ENCODE measurements at regions of chr7 and their contacts with region 1.

Region 1: GRCh38 chr7:143416565-143417149 is 8.0 kb upstream of the EPHA1 start:
- DNase-seq: peak in 4 of 14 experiments; percentile 20 to 75 (median 68)
- ATAC-seq: no peak
- H3K4me3 ChIP-seq: no peak overlapping the region
- H3K4me3 Mint-ChIP-seq: no peak overlapping the region
- H3K27ac ChIP-seq: no peak overlapping the region
- H3K27ac Mint-ChIP-seq: no peak overlapping the region
- H3K4me1 ChIP-seq: no peaks in the 10 kb centered on the region
- H3K4me1 Mint-ChIP-seq: peaks cover 46% of the 10 kb centered on the region
- H3K27me3 ChIP-seq: no peaks in the 10 kb centered on the region
- H3K27me3 Mint-ChIP-seq: no peaks in the 10 kb centered on the region
- CTCF ChIP-seq: peak; percentile 82

Region 2: GRCh38 chr7:143299840-143300239 is 116.8 kb before region 1 on chr7:
- CTCF ChIA-PET with region 1: no interaction called
- POLR2A ChIA-PET with region 1: no interaction called
- intact Hi-C with region 1: loop called (anchors 2 to 5 kb)
- DNase-seq: peak; percentile 52 to 83 (median 67)
- ATAC-seq: peak; percentile 100
- H3K4me3 ChIP-seq: no peak overlapping the region
- H3K4me3 Mint-ChIP-seq: no peak overlapping the region
- H3K27ac ChIP-seq: no peak overlapping the region
- H3K27ac Mint-ChIP-seq: no peak overlapping the region
- H3K4me1 ChIP-seq: peaks cover 11% of the 10 kb centered on the region
- H3K4me1 Mint-ChIP-seq: peaks cover 40% of the 10 kb centered on the region
- H3K27me3 ChIP-seq: no peaks in the 10 kb centered on the region
- H3K27me3 Mint-ChIP-seq: no peaks in the 10 kb centered on the region
- CTCF ChIP-seq: peak; percentile 70

Region 3: DNA sequence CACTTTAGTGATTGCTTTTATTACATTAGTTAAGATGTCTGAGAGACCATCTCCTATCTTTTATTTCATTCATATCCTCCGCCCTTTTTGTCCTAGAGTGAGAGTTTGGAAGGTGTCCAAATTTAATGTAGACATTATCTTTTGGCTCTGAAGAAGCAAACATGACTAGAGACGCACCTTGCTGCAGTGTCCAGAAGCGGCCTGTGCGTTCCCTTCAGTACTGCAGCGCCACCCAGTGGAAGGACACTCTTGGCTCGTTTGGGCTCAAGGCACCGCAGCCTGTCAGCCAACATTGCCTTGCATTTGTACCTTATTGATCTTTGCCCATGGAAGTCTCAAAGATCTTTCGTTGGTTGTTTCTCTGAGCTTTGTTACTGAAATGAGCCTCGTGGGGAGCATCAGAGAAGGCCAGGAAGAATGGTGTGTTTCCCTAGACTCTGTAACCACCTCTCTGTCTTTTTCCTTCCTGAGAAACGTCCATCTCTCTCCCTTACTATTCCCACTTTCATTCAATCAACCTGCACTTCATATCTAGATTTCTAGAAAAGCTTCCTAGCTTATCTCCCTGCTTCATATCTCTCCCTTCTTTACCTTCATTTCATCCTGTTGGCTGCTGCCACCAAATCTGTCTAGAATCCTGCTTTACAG is 111.1 kb before region 1 on chr7:
- CTCF ChIA-PET with region 1: no interaction called
- POLR2A ChIA-PET with region 1: no interaction called
- intact Hi-C with region 1: loop called (anchors 2 to 5 kb)
- DNase-seq: peak; percentile 53 to 81 (median 65)
- ATAC-seq: peak; percentile 74
- H3K4me3 ChIP-seq: no peak overlapping the region
- H3K4me3 Mint-ChIP-seq: no peak overlapping the region
- H3K27ac ChIP-seq: no peak overlapping the region
- H3K27ac Mint-ChIP-seq: peak overlapping the region; percentile 5
- H3K4me1 ChIP-seq: peaks cover 17% of the 10 kb centered on the region
- H3K4me1 Mint-ChIP-seq: peaks cover 25% of the 10 kb centered on the region
- H3K27me3 ChIP-seq: no peaks in the 10 kb centered on the region
- H3K27me3 Mint-ChIP-seq: no peaks in the 10 kb centered on the region
- CTCF ChIP-seq: peak; percentile 64

Region 4: GRCh38 chr7:143345428-143345900 is 71.2 kb before region 1 on chr7:
- CTCF ChIA-PET with region 1: no interaction called
- POLR2A ChIA-PET with region 1: no interaction called
- intact Hi-C with region 1: loop called in 1 of 2 experiments (anchors 1 kb)
- DNase-seq: peak; percentile 42 to 86 (median 60)
- ATAC-seq: peak; percentile 100
- H3K4me3 ChIP-seq: peak overlapping the region; percentile 17
- H3K4me3 Mint-ChIP-seq: peak overlapping the region; percentile 65
- H3K27ac ChIP-seq: no peak overlapping the region
- H3K27ac Mint-ChIP-seq: no peak overlapping the region
- H3K4me1 ChIP-seq: peaks cover 9% of the 10 kb centered on the region
- H3K4me1 Mint-ChIP-seq: peaks cover 9% of the 10 kb centered on the region
- H3K27me3 ChIP-seq: peaks cover 0 to 4% of the 10 kb centered on the region in 2 experiments
- H3K27me3 Mint-ChIP-seq: peaks cover 15% of the 10 kb centered on the region
- CTCF ChIP-seq: peak; percentile 67

Measured in CD4-positive, alpha-beta T cell (primary cell).